WTC11 (cell line): ENCODE measurements at regions of chr19 and their contacts with region 1.

Region 1: GRCh38 chr19:7861955-7862951 is 11.9 kb downstream of the PRR36 start:
- DNase-seq: peak; percentile 99
- ATAC-seq: peak; percentile 71
- H3K4me3 Mint-ChIP-seq: peak overlapping the region; percentile 79
- H3K27ac Mint-ChIP-seq: no peak overlapping the region
- H3K4me1 Mint-ChIP-seq: peaks cover 21% of the 10 kb centered on the region
- H3K27me3 Mint-ChIP-seq: peaks cover 77% of the 10 kb centered on the region
- CTCF ChIP-seq: peak; percentile 22; the same call in 1 of the 2 replicates

Region 2: DNA sequence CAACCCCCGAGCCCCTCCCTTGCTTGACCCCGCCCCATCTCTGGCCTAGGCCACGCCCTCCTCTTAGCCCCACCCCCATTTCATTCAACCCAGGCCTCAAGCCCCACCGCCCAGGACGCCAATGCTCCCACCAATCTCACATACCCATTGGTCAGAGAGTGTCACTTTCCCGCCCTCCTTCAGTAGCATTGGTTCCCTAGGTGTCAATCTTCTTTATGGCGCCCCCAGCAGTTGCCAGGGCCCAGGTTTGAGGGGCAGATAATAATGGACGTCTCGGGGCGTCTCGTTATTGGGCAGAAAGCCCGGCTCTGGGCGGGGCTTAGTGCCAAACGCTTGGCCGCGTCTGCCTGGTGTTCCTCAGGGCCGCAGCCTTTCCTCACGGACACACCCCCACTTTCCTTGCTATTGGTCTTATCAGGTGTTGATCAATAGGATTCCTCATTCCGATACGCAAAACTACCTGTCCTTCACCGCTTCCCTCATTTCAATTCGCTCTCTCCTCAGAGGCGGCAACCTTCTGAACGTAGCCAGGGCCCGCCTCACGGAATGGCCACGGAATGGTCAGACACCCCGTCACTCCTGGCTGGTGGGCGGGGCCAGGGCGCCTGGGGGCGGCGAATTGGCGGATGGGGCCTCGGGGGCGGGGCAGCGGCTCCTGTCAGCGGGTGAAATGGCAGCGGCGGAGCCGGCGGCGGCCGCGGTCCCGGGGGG is 32.5 kb before region 1 on chr19 and contains the start of gene EVI5L:
- CTCF ChIA-PET with region 1: interaction called, 21 read pairs
- POLR2A ChIA-PET with region 1: interaction called, 3 read pairs
- DNase-seq: peak; percentile 99
- ATAC-seq: peak; percentile 92
- H3K4me3 Mint-ChIP-seq: peak within 1 kb of the TSS; percentile 91
- H3K27ac Mint-ChIP-seq: no peak within 1 kb of the TSS
- H3K4me1 Mint-ChIP-seq: peaks cover 14% of the 10 kb centered on the region
- H3K27me3 Mint-ChIP-seq: peaks cover 55% of the 10 kb centered on the region
- CTCF ChIP-seq: no peak
- total RNA-seq, gene EVI5L: 10.5 to 13.7 TPM (median 13.6 TPM) in 3 replicates

Region 3: GRCh38 chr19:7888145-7888825 is 26.0 kb after region 1 on chr19 and contains the start of gene LRRC8E:
- CTCF ChIA-PET with region 1: interaction called, 15 read pairs
- POLR2A ChIA-PET with region 1: interaction called, 3 read pairs
- DNase-seq: peak; percentile 87
- ATAC-seq: peak; percentile 97
- H3K4me3 Mint-ChIP-seq: peak within 1 kb of the TSS; percentile 65
- H3K27ac Mint-ChIP-seq: no peak within 1 kb of the TSS
- H3K4me1 Mint-ChIP-seq: peaks cover 3% of the 10 kb centered on the region
- H3K27me3 Mint-ChIP-seq: peaks cover 56% of the 10 kb centered on the region
- CTCF ChIP-seq: no peak
- total RNA-seq, gene LRRC8E: 3.0 to 3.6 TPM (median 3.1 TPM) in 3 replicates

Region 4: GRCh38 chr19:7908742-7909461 is 46.6 kb after region 1 on chr19:
- CTCF ChIA-PET with region 1: interaction called, 20 read pairs
- POLR2A ChIA-PET with region 1: interaction called, 8 read pairs
- DNase-seq: no peak
- ATAC-seq: peak; percentile 47
- H3K4me3 Mint-ChIP-seq: no peak overlapping the region
- H3K27ac Mint-ChIP-seq: no peak overlapping the region
- H3K4me1 Mint-ChIP-seq: peaks cover 12% of the 10 kb centered on the region
- H3K27me3 Mint-ChIP-seq: no peaks in the 10 kb centered on the region; the same call in 1 of the 2 replicates
- CTCF ChIP-seq: no peak

Region 5: DNA sequence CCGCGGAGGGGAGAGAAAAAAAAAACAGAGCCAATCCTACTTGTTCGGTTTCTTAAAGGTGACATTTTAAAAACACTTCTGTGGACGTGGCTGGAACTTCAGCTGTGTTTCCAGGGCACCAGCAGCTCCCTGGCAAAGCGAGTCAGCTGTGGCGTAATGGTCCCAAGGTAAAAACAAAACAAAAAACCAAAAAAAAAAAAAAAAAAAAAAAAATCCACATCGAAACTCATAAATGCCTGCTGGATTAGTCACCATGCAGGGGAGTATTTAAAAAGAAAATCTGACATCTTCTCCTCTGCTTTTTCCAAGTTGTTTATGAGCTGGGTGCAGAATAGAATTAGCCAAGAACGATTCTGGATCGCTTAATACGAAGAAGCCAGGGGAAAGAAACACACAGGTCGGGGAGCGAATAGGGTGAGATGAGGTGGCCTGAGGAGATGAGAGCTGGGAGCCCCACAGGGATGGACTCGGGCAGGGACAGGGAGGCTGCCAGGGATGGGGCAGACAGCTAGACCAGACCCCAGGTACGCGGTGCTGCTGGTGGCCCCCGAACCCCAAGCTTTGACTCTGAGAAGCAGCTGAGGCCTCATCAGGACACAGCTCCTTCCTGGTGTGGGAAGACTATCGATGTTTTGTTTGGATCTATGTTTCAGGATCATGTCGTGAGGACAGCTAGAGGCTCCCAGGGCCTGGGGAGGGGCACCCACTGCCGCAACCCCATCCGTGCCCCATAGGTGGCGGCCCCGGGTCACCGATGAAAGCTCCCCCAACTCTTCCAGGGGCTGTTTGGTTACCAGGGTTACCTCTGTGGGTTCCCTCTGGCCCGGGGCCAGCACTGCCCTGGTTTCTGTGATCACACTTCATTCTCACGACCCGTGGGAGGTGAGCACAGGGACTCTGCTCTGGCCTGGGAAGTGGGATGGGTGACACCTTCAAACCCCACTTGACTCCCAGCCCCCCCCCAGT is 66.8 kb after region 1 on chr19:
- CTCF ChIA-PET with region 1: interaction called, 20 read pairs
- POLR2A ChIA-PET with region 1: interaction called, 11 read pairs
- DNase-seq: peak; percentile 84
- ATAC-seq: peak; percentile 63
- H3K4me3 Mint-ChIP-seq: no peak overlapping the region
- H3K27ac Mint-ChIP-seq: peak overlapping the region; percentile 70; the same call in 1 of the 2 replicates
- H3K4me1 Mint-ChIP-seq: peaks cover 4% of the 10 kb centered on the region; the same call in 1 of the 2 replicates
- H3K27me3 Mint-ChIP-seq: no peaks in the 10 kb centered on the region
- CTCF ChIP-seq: peak; percentile 71